ENCODE measurements at regions of chr1 and their contacts with region 1.

Region 1: GRCh38 chr1:85230305-85230980 is 29.0 kb downstream of the C1orf52 start:
- DNase-seq: no peak
- H3K4me3 ChIP-seq: no peak overlapping the region
- H3K27ac ChIP-seq: no peak overlapping the region
- H3K4me1 ChIP-seq: peaks cover 2% of the 10 kb centered on the region
- H3K27me3 ChIP-seq: no peaks in the 10 kb centered on the region
- CTCF ChIP-seq: no peak
- EP300 ChIP-seq: no peak
- POLR2A ChIP-seq: no peak

Region 2: DNA sequence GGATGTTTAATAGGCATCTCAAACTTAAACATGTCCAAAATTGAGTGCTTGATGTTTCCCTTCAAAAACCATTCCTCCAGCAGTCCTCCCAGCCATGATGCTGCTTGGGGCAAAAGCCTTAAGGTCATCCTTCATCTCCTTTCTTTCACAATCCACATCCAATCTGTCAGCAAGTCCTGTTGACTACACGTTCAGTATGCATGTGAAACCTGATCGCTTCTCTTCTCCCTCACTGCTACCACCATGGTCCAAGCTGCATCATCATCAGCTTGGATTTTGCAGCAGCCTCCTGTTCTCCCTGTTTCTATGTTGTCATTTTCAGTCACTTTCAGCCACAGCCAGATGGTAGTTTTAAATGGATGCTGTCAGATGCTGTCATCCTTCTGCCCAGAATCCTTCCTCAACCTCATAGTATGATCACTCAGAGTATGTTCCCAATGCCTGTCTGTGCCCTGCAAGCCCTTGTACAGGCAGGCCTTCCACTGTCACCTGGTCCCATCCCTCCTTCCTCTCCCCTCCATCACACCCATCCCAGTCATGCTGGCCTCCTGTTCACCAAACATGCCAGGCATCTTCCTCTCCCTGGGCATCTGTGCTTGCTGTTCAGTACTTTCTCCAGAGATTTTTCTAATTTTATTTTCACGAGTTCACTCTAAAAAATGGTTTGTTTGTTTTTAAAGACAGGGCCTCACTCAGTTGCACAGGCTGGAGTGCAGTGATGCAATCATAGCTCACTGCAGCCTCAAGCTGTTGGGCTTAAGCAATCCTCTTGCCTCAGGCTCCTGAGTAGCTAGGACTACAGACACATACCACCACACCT is 95.7 kb before region 1 on chr1:
- intact Hi-C with region 1: loop called in 1 of 4 experiments (anchors 10 kb)
- DNase-seq: no peak
- H3K4me3 ChIP-seq: no peak overlapping the region
- H3K27ac ChIP-seq: no peak overlapping the region
- H3K4me1 ChIP-seq: no peaks in the 10 kb centered on the region
- H3K27me3 ChIP-seq: no peaks in the 10 kb centered on the region
- CTCF ChIP-seq: no peak
- EP300 ChIP-seq: no peak
- POLR2A ChIP-seq: no peak

Region 3: DNA sequence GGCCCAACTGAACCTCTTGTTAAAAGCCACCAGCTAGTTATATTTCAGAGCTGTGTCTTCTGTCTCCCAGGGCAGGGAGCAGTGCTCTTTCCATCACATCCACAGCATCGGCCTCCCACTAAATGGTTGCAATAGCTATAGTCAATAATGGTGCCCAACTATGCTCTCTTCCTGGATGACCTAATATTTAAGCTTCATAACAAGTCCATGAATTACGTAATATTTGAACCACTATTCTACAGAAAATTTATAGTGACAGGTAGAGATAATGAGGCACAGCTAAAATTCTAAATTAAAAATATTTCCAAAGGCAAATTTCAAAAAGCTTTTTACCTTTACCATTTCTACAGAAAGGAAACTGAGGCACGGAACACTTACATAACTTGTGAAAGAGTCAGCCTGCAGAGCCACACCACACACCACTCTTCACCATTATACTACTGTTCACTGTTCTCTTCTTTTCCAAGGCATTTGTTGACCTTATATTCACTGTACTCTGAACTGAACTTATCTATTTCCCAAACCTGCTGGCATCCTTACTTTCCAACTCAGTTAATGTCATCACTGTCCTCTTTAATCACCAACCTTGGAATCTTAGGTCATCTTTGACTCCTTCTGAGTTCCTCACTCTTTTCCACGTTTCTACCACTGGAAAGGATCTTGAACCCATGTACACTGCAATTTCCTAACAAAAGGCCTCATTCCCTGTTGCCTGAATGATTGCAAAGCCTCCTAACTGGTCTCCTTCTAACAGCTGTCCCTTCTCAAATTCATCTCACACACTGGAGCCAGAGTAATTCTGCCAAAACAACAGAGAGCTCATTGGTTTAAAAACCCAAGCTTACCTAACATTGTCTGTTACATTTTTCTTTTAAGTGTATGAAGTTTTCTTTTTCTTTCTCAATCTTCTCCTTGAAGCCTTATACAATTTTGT is 149.0 kb after region 1 on chr1:
- intact Hi-C with region 1: no loop called
- DNase-seq: no peak
- H3K4me3 ChIP-seq: no peak overlapping the region
- H3K27ac ChIP-seq: peak overlapping the region in 1 of 2 donors; percentile 1
- H3K4me1 ChIP-seq: peaks cover 5% of the 10 kb centered on the region
- H3K27me3 ChIP-seq: no peaks in the 10 kb centered on the region
- CTCF ChIP-seq: no peak
- EP300 ChIP-seq: no peak
- POLR2A ChIP-seq: no peak

Region 4: DNA sequence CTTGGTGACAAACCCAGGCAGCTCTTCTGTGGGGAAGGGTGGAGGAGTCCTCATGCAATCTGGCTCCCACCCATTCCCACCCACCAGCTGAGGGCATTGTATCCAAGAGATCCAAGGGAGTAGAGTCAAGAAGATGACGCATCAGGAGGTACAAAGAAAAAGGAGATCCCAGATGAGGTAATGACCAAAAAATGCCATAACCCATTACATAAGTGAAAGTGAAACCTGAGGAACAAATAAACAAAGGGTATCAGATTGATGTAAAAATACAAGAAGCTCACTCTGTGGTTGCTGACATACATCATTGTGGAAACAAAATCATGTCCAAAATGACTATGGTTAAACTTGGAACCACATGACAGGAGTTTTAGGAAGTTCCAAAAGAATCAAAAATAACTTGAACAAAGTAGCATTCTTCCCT is 392.6 kb after region 1 on chr1:
- intact Hi-C with region 1: no loop called
- DNase-seq: no peak
- H3K4me3 ChIP-seq: no peak overlapping the region
- H3K27ac ChIP-seq: no peak overlapping the region
- H3K4me1 ChIP-seq: no peaks in the 10 kb centered on the region
- H3K27me3 ChIP-seq: no peaks in the 10 kb centered on the region
- CTCF ChIP-seq: no peak
- EP300 ChIP-seq: no peak
- POLR2A ChIP-seq: no peak

Measured in ovary (tissue), 10 donors.